ENCODE measurements at regions of chr15 and their contacts with region 1.

Region 1: GRCh38 chr15:43824302-43825246 is at the start of gene MFAP1:
- DNase-seq: peak; percentile 99
- H3K4me3 ChIP-seq: peak within 1 kb of the TSS; percentile 94
- H3K27ac ChIP-seq: peak within 1 kb of the TSS; percentile 86
- H3K4me1 ChIP-seq: peaks cover 43% of the 10 kb centered on the region
- CTCF ChIP-seq: no peak
- total RNA-seq, gene MFAP1: 25.3 and 43.4 TPM in 2 replicates

Region 2: DNA sequence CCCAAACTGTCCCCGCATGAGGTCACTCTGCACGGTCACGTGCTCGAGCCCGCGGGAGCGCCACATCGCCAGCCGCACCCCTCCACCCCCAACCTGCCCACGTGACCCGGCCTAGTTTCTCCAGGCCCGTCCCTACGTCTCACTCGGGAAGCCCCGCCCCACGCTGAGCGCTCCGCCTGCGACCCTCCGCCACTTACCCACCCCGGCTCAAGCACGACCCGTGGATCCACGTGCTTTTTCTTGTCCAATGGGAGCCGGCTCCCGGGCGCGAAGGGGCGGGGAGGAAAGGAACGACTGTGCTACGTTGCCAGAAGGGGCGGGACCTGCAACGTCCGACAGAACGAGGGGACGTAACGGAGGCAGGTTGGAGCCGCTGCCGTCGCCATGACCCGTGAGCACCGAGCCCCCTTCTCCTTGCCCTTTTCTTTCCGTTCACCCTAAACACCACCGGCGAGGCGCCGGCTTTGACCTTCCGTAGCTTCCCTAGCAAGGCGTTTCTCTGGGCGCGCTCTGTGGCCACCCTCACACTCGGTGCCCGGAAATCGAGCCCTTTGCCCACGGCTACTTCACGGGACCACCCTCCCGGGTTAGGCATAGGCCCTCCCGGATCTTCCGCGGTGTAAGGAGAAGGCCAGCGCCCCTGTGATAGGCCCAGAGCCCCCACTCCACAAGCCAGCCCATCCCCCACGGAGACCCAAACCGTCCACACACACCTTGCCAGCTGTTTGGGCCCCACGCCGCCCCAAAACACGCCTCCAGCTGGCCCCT is 32.4 kb before region 1 on chr15 and contains the start of gene SERF2:
- CTCF ChIA-PET with region 1: interaction called, 3 read pairs
- POLR2A ChIA-PET with region 1: interaction called, 47 read pairs
- intact Hi-C with region 1: loop called (anchors 1 kb)
- DNase-seq: peak; percentile 99
- H3K4me3 ChIP-seq: peak within 1 kb of the TSS; percentile 97
- H3K27ac ChIP-seq: peak within 1 kb of the TSS; percentile 100
- H3K4me1 ChIP-seq: peaks cover 87% of the 10 kb centered on the region
- CTCF ChIP-seq: no peak
- total RNA-seq, gene SERF2: 581 and 622 TPM in 2 replicates

Measured in OCI-LY7 (cell line).